ENCODE measurements at regions of chr21 and their contacts with region 1.

Region 1: DNA sequence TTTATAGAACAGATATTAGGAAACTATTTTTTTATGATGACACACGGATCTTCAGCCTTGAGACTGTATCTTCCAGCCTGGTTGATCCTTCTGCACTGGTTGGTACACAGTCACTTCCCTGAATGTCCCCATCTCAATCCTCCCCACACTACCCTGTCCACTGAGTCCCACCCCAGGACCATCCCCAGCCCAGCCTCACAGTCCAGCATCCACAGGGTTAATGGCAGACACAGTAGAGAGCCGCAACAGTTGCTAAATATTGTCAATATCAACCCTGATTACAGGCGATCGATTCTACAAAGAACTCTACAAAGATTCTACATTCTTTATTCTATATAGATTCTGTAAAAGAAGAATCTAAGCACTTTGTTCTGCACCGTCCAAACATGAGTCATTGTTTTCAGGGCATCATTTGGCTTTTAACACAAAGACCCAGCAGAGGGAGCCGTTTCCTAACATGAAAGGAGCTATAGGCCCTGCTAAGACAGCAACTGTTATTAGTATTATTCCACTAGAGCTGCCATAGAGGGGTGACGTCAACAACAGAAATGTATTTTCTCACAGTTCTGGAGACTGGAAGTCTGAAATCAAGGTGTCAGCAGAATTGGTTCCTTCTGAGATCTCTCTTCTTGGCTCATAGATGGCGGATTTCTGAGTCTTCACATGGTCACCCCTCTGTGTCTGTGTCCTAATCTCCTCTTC is 30.1 kb upstream of the IFNAR2 start:
- DNase-seq: peak; percentile 86
- H3K4me3 ChIP-seq: no peak overlapping the region
- H3K27ac ChIP-seq: peak overlapping the region; percentile 19 to 52 (median 36)
- H3K4me1 ChIP-seq: peaks cover 0 to 26% (median 14%) of the 10 kb centered on the region in 4 donors
- H3K27me3 ChIP-seq: no peaks in the 10 kb centered on the region
- CTCF ChIP-seq: peak; percentile 69 to 86 (median 79)
- EP300 ChIP-seq: no peak
- POLR2A ChIP-seq: no peak

Region 2: GRCh38 chr21:32348654-32349587 is 850.7 kb before region 1 on chr21:
- in situ Hi-C with region 1: no loop called
- intact Hi-C with region 1: no loop called
- DNase-seq: no peak
- H3K4me3 ChIP-seq: no peak overlapping the region
- H3K27ac ChIP-seq: no peak overlapping the region
- H3K4me1 ChIP-seq: no peaks in the 10 kb centered on the region
- H3K27me3 ChIP-seq: no peaks in the 10 kb centered on the region
- CTCF ChIP-seq: no peak
- EP300 ChIP-seq: no peak
- POLR2A ChIP-seq: no peak

Region 3: GRCh38 chr21:32929633-32930038 is 270.0 kb before region 1 on chr21:
- in situ Hi-C with region 1: loop called in 1 of 4 experiments (anchors 10 kb)
- intact Hi-C with region 1: no loop called
- DNase-seq: no peak
- H3K4me3 ChIP-seq: no peak overlapping the region
- H3K27ac ChIP-seq: no peak overlapping the region
- H3K4me1 ChIP-seq: no peaks in the 10 kb centered on the region
- H3K27me3 ChIP-seq: no peaks in the 10 kb centered on the region
- CTCF ChIP-seq: no peak
- EP300 ChIP-seq: no peak
- POLR2A ChIP-seq: no peak

Region 4: DNA sequence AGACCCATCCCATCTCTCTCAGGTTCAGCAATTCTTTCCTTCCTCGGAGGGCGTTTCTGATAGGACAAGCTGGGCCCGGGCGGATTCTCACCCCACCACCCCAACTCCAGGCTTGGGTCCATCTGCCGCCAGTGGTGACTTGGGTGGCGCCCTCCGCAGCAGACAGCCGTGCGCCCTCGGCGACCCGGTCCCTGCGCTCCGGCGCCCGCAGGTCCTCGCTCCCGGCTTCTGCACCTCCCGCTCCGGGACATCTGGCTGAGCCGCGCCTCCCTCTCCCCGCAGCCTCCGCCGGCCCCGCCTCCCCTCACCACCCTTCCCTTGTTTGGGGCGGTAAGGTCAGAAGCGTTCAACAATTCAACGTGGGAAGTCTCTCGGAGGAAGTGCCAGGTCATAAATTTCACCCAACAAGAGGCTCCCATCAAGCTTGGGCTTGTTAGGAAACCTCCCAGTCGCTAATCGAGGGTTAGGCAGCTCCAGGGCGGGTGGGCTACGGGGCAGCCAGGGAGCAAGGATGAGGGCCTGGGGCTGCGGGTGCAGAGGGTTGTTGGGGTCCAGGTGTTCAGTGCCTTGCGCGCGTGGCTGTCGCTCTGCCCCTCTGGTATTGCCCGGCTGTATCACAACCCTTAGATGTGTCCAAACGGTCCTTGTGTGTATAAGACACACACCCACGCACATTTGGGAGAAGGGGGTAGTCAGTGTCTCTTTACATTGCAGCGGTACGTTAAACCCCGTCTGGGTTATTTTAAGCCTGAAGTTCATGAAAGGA is 89.9 kb before region 1 on chr21:
- in situ Hi-C with region 1: no loop called
- intact Hi-C with region 1: no loop called
- DNase-seq: no peak
- H3K4me3 ChIP-seq: peak overlapping the region in 1 of 4 donors; percentile 11
- H3K27ac ChIP-seq: no peak overlapping the region
- H3K4me1 ChIP-seq: peaks cover 0 to 6% (median 2%) of the 10 kb centered on the region in 4 donors
- H3K27me3 ChIP-seq: peaks cover 69% of the 10 kb centered on the region
- CTCF ChIP-seq: no peak
- EP300 ChIP-seq: no peak
- POLR2A ChIP-seq: no peak

Region 5: DNA sequence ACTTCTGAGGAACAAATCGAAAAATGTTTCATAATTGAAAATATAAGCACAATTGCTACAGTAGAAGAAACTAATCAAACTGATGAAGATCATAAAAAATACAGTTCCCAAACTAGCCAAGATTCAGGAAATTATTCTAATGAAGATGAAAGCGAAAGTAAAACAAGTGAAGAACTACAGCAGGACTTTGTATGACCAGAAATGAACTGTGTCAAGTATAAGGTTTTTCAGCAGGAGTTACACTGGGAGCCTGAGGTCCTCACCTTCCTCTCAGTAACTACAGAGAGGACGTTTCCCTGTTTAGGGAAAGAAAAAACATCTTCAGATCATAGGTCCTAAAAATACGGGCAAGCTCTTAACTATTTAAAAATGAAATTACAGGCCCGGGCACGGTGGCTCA is 155.7 kb after region 1 on chr21:
- in situ Hi-C with region 1: loop called in 2 of 4 experiments (anchors 5 to 10 kb)
- intact Hi-C with region 1: loop called (anchors 10 kb)
- DNase-seq: no peak
- H3K4me3 ChIP-seq: no peak overlapping the region
- H3K27ac ChIP-seq: no peak overlapping the region
- H3K4me1 ChIP-seq: peaks cover 0 to 4% (median under 1%) of the 10 kb centered on the region in 4 donors
- H3K27me3 ChIP-seq: no peaks in the 10 kb centered on the region
- CTCF ChIP-seq: no peak
- EP300 ChIP-seq: no peak
- POLR2A ChIP-seq: no peak

Region 6: GRCh38 chr21:33419538-33420123 is 220.0 kb after region 1 on chr21:
- in situ Hi-C with region 1: no loop called
- intact Hi-C with region 1: no loop called
- DNase-seq: no peak
- H3K4me3 ChIP-seq: no peak overlapping the region
- H3K27ac ChIP-seq: peak overlapping the region in 3 of 4 donors; percentile 12 to 62 (median 36)
- H3K4me1 ChIP-seq: peaks cover 0 to 32% (median 2%) of the 10 kb centered on the region in 4 donors
- H3K27me3 ChIP-seq: no peaks in the 10 kb centered on the region
- CTCF ChIP-seq: no peak
- EP300 ChIP-seq: no peak
- POLR2A ChIP-seq: no peak

Region 7: GRCh38 chr21:33441489-33442477 is 242.1 kb after region 1 on chr21:
- in situ Hi-C with region 1: loop called in 2 of 4 experiments (anchors 5 to 10 kb)
- intact Hi-C with region 1: loop called (anchors 10 kb)
- DNase-seq: peak; percentile 59
- H3K4me3 ChIP-seq: no peak overlapping the region
- H3K27ac ChIP-seq: peak overlapping the region; percentile 43 to 70 (median 56)
- H3K4me1 ChIP-seq: peaks cover 0 to 12% (median 5%) of the 10 kb centered on the region in 4 donors
- H3K27me3 ChIP-seq: no peaks in the 10 kb centered on the region
- CTCF ChIP-seq: no peak
- EP300 ChIP-seq: no peak
- POLR2A ChIP-seq: no peak